ENCODE measurements at regions of chr1 and their contacts with region 1.

Region 1: GRCh38 chr1:214328770-214329469 is 48.0 kb downstream of the SMYD2 start:
- DNase-seq: peak; percentile 84

Region 2: DNA sequence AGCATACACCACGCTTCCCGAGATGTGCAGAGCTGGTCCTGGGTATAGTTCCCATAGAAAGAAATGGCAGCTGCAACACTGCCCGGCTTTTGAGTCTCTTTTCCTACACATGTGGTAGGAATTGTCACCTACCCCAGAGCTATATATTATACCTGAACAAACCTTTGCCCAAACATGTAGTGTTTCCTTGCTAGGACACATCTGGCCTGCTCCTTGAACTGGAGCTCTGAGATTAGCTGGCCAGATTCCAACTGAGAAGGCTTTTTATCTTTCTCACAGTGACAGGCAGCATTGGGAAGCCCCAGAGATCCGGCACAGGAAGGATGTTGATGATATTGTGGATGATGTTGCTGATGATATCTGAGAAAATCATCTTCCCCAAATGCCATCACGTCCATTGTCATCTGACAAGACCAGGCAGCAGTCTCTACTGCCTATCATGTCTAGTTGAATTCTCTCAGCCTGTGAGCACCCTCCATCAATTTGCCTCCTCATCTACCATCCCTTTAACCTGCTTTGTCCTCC is 163.0 kb before region 1 on chr1:
- in situ Hi-C with region 1: no loop called
- DNase-seq: no peak

Region 3: GRCh38 chr1:214213136-214213535 is 115.8 kb before region 1 on chr1:
- in situ Hi-C with region 1: loop called (anchors 10 kb)
- DNase-seq: no peak

Region 4: GRCh38 chr1:214584805-214585766 is 256.2 kb after region 1 on chr1:
- in situ Hi-C with region 1: loop called (anchors 25 kb)
- DNase-seq: peak; percentile 56

Measured in KBM-7 (cell line).